Activated T-helper 1 cell treated with anti-CD3 and anti-CD28 coated beads, Interleukin-12 subunit alpha, Interleukin-12 subunit beta, Interleukin-2, Interleukin-4 antibody, amounts not matched to agents 30 ng/mL and 10 ng/mL and 1 ng/mL, durations not matched to agents 14 hours and 24 hours and 36 hours (primary cell): ENCODE measurements at regions of chr19 and their contacts with region 1.

Region 1: GRCh38 chr19:11374433-11375142 is at the start of gene SWSAP1:
- DNase-seq: peak; percentile 97
- H3K4me3 Mint-ChIP-seq: no peak within 1 kb of the TSS
- H3K27ac Mint-ChIP-seq: no peak within 1 kb of the TSS
- H3K4me1 Mint-ChIP-seq: peaks cover 31% of the 10 kb centered on the region
- H3K27me3 Mint-ChIP-seq: no peaks in the 10 kb centered on the region
- total RNA-seq, gene SWSAP1: 3.2 and 3.9 TPM in 2 replicates

Region 2: GRCh38 chr19:11197264-11198174 is 177.1 kb before region 1 on chr19 and contains the start of gene KANK2:
- intact Hi-C with region 1: no loop called
- DNase-seq: peak; percentile 67
- H3K4me3 Mint-ChIP-seq: peak within 1 kb of the TSS; percentile 75
- H3K27ac Mint-ChIP-seq: no peak within 1 kb of the TSS
- H3K4me1 Mint-ChIP-seq: no peaks in the 10 kb centered on the region
- H3K27me3 Mint-ChIP-seq: peaks cover 21% of the 10 kb centered on the region
- total RNA-seq, gene KANK2: 2.7 and 3.9 TPM in 2 replicates

Region 3: DNA sequence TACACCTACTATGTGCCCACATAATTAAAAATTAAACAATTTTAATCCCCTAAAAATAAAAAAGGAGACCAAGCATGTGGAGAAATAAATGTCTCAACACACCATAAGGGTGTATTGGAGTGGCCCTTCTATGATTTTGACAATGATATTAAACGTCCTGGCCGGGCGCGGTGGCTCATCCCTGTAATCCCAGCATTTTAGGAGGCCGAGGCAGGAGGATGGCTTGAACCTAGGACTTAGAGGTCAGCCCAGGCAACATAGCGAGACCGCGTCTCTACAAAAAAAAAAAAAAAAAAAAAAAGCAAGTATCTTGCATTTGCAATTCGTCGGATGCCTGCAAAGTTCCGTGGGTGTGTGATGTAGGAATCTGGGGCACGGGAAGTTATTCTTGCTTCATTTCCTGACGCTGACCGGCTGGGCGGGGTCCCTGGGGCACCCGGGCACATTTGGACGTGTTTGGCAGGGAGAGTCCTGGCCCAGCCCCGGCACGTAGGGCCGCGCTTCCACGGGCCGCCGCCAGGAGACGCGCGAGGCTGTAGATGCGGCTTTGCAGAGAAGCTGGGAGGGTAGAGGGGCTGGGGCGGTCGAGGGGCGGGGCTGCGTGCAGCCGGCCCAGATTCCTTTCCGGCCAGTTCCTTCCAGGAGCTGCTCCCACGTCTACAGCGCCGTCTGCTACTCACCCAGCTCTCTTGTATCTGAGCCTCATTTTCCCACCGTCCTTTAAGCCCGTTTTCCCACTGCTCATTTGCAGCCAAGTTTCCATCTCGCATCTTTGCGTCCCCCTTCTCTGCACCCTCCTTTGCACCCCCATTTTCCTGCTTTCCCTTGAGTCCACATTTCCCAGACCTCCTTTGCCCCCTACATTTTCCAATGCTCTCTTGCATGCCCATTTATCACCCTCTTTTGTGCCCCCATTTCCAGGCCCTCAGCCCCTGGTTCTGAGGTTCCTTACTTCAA is 80.9 kb before region 1 on chr19:
- intact Hi-C with region 1: loop called (anchors 2 kb)
- DNase-seq: peak; percentile 72
- H3K4me3 Mint-ChIP-seq: peak overlapping the region; percentile 49
- H3K27ac Mint-ChIP-seq: no peak overlapping the region
- H3K4me1 Mint-ChIP-seq: peaks cover 10% of the 10 kb centered on the region
- H3K27me3 Mint-ChIP-seq: peaks cover 20% of the 10 kb centered on the region

Region 4: DNA sequence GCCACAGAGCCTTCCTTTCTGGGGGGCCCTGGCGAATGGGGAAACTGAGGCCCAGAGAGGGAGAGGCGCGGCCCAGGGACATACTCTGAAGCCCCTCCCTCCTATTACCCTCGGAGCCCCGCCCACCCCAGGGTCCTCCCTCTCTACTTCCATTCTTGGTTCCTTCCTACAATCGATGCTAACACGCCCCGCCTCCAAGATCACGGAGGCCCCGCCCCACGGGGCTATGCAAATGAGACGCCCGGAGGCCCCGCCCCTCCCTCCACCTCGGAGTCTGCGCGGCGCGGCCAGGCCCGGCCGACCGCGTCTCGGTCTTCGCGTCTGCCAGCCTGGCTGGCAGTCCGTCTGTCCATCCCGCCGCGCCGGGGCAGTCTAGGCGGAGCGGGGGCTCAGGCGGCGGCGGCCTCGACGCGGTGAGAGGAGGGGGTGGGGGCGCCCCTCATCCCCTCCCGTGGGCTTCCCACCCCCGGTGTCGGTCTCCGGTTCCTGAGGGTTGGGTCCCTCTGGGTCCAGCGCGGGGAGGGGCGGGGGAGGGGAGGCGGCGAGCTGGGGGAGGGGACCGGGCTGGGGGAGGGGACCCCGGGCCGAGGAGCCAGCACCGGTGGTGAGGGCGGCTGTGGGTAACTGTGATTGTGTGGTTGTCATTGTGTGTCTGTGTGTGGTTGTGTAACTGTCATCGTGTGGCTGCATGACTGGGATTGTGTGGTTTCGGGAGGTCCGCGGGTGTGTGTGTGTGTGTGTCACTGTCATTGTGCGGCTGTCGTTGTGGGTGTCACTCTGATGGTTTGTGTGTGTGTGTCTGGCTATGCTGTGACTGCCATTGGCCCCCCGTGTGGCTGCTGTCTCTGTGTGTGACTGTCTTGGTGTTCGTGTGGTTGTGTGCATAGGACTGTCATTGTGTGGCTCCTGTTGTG is 19.2 kb before region 1 on chr19 and contains the start of gene PLPPR2:
- intact Hi-C with region 1: loop called (anchors 1 kb)
- DNase-seq: peak; percentile 79
- H3K4me3 Mint-ChIP-seq: peak within 1 kb of the TSS; percentile 67
- H3K27ac Mint-ChIP-seq: no peak within 1 kb of the TSS
- H3K4me1 Mint-ChIP-seq: peaks cover 11% of the 10 kb centered on the region
- H3K27me3 Mint-ChIP-seq: peaks cover 15% of the 10 kb centered on the region
- total RNA-seq, gene PLPPR2: 2.0 TPM in 2 replicates

Region 5: DNA sequence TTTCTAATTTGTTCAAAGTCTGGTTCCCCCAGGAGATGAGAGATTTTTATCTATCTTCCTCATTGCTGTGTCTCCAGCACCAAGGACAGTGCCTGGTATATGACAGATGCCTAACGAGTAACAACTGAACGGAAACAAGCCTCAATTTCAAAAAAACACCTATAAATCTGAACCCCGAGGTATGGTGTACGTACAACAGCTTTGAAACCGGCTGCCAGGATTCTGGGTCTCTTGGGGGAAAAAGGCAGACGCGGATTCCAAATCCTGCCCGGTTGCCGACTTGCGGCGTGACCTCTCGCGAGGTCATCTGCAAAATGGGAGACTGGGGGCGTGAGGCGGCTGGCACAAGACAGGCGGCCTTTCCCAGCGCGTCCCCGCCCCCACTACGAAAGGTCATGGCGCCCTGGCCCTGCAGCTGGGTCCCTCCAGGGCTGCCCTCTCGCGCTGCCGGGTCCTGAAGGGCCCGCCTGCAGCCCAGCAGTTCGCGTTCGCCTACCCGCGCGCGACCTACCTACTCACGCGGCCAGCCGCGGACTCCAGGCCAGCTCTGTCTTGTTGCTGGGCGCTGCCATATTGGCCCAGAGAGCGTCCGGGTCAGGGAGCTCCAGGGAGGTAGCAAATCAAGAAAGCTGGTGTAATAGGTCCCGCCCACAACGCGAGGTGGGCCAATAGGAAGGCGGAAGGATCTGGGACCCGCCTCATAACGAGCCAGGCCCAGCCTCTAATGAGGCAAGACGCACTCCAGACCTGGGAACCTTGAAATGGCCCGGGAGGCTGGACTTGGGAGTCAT is 154.2 kb after region 1 on chr19 and contains the start of gene ECSIT:
- intact Hi-C with region 1: loop called (anchors 1 kb)
- DNase-seq: peak; percentile 89
- H3K4me3 Mint-ChIP-seq: peak within 1 kb of the TSS; percentile 95
- H3K27ac Mint-ChIP-seq: peak within 1 kb of the TSS; percentile 92
- H3K4me1 Mint-ChIP-seq: peaks cover 28% of the 10 kb centered on the region
- H3K27me3 Mint-ChIP-seq: no peaks in the 10 kb centered on the region
- total RNA-seq, gene ECSIT: 37.3 and 38.8 TPM in 2 replicates